Psoas muscle (tissue), 8 donors: ENCODE measurements at regions of chr6 and their contacts with region 1.

Region 1: GRCh38 chr6:143099647-143100046 is 39.0 kb downstream of the AIG1 start:
- DNase-seq: no peak
- ATAC-seq: no peak
- H3K4me3 ChIP-seq: no peak overlapping the region
- H3K27ac ChIP-seq: no peak overlapping the region
- H3K4me1 ChIP-seq: no peaks in the 10 kb centered on the region
- H3K27me3 ChIP-seq: no peaks in the 10 kb centered on the region
- CTCF ChIP-seq: no peak

Region 2: DNA sequence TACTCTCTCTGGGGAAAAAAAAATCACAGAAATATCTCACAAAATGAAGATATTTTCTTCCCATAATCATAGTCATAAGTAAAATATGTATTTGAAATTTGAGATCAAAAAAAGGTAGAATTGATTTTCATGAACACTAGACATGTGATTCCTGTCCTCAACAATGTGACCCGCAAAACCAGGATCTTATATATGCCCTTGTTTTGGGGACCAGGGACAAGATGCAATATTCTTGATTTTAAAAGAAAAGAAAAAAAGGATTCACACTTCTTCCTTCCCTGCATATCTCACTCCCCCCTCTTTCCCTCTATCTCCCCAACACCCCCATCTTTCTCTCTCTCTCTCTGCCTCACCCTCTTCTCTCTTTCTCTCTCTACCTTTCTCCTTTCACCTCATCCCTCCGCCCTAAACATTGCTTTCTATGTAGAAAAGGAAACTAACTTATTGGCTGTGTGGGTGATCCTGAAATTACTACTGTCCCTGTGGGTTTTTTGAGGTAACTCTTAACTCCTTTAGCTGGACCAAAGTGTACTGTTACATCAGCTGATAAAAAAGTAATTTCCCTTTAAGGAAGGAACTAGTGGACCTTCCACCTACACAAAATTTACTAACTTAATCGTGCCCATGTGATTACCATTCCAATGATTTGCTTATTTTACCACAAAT is 46.7 kb after region 1 on chr6:
- intact Hi-C with region 1: loop called in 1 of 2 experiments (anchors 5 kb)
- DNase-seq: no peak
- ATAC-seq: no peak
- H3K4me3 ChIP-seq: no peak overlapping the region
- H3K27ac ChIP-seq: no peak overlapping the region
- H3K4me1 ChIP-seq: no peaks in the 10 kb centered on the region
- H3K27me3 ChIP-seq: no peaks in the 10 kb centered on the region
- CTCF ChIP-seq: no peak